Heart right ventricle (tissue), 16 donors: ENCODE measurements at regions of chr5 and their contacts with region 1.

Region 1: DNA sequence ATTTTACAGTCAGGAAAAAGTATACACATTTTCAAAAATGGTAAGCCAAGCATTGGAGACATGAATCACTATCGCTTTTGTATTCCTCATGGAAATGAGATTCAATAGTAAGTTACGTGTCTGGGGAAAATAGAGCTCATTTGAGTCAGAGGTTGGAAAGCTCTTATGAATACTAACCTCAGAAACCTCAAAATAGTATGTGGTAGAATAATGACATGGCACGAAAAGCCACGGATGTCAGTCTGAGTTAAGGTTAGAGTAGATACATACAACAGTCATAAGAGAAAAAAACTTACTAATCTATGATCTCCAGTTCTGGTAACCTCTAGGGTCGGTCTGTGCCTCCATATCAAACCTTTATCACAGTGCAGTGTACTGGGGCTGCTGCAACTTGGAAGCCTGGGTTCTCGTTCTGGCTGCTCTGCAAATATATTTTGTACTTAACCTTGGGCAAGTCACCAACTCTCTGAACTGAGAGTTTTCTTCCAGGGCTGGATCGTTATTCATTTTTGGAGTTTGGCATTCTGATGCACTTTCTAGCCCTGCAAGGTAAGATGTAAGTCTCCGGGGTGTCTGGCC is 31.8 kb downstream of the MAP1B start:
- DNase-seq: no peak
- ATAC-seq: peak in 5 of 8 donors; percentile 10 to 44 (median 34)
- H3K4me3 ChIP-seq: no peak overlapping the region
- H3K27ac ChIP-seq: peak overlapping the region in 8 of 10 donors; percentile 1 to 38 (median 18)
- H3K4me1 ChIP-seq: peaks cover 0 to 78% (median 46%) of the 10 kb centered on the region in 9 donors
- H3K27me3 ChIP-seq: peaks cover 0 to 12% (median 0%) of the 10 kb centered on the region in 7 donors
- CTCF ChIP-seq: no peak

Region 2: GRCh38 chr5:72179028-72179815 is 40.2 kb after region 1 on chr5:
- intact Hi-C with region 1: loop called in 1 of 10 experiments (anchors 5 kb)
- DNase-seq: peak; percentile 45 to 58
- ATAC-seq: peak; percentile 43 to 86 (median 74)
- H3K4me3 ChIP-seq: peak overlapping the region in 5 of 10 donors; percentile 11 to 37 (median 31)
- H3K27ac ChIP-seq: peak overlapping the region in 8 of 10 donors; percentile 51 to 77 (median 61)
- H3K4me1 ChIP-seq: peaks cover 0 to 18% (median 6%) of the 10 kb centered on the region in 9 donors
- H3K27me3 ChIP-seq: no peaks in the 10 kb centered on the region
- CTCF ChIP-seq: no peak

Region 3: GRCh38 chr5:72244862-72245371 is 105.9 kb after region 1 on chr5:
- intact Hi-C with region 1: loop called in 2 of 10 experiments (anchors 10 kb)
- DNase-seq: peak in 1 of 2 donors; percentile 12
- ATAC-seq: peak in 7 of 8 donors; percentile 66 to 88 (median 77)
- H3K4me3 ChIP-seq: no peak overlapping the region
- H3K27ac ChIP-seq: peak overlapping the region in 8 of 10 donors; percentile 4 to 69 (median 52)
- H3K4me1 ChIP-seq: peaks cover 10 to 55% (median 50%) of the 10 kb centered on the region in 9 donors
- H3K27me3 ChIP-seq: no peaks in the 10 kb centered on the region
- CTCF ChIP-seq: peak in 8 of 9 donors; percentile 17 to 56 (median 41)

Region 4: DNA sequence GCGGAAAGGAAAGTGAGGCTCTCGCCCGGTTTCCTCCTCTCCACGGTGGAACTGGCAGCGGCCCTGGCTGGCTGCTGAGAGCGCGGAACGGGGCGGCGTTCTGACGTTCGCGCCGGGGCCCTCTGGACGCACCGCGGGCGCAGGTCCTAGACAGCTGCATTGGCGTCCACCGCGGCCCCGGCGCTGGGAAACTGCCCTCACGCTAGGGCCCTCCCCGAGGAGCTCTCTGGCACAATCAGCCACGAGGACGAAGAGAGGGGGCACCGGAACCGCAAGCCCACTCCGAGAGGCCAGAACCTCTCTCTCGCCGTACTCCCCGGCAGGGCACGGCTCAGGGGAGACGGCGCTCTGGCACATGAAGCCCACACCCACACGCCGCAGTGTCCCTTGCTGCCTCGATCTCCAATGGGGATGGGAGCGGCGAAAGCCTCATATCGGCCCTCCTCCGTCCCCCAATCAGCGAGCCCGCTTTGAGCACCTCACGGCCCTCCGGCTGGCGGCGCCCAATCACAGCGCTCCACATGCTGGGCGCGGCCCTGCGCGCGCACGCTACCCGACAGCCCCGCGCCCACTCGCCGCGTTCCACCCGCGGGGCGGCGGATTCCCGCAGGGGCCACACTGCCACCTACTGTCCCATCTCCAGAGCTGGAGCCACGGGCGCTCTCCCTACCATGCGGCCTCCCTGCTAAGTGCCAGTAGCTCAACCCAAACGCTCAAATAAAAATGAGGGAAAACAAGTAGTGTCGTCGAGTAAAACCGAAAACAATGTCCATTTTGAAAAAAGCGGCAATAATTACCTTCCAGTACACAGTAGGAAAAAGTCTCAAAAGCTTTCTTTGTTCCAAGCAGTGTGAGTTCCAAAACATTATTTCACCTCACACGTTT is 169.2 kb after region 1 on chr5:
- intact Hi-C with region 1: loop called (anchors 1 to 10 kb)
- DNase-seq: peak; percentile 97 to 98
- ATAC-seq: peak; percentile 98 to 100 (median 99)
- H3K4me3 ChIP-seq: peak overlapping the region; percentile 44 to 82 (median 70)
- H3K27ac ChIP-seq: peak overlapping the region; percentile 68 to 97 (median 94)
- H3K4me1 ChIP-seq: peaks cover 0 to 28% (median 12%) of the 10 kb centered on the region in 9 donors
- H3K27me3 ChIP-seq: no peaks in the 10 kb centered on the region
- CTCF ChIP-seq: peak; percentile 84 to 98 (median 93)

Region 5: DNA sequence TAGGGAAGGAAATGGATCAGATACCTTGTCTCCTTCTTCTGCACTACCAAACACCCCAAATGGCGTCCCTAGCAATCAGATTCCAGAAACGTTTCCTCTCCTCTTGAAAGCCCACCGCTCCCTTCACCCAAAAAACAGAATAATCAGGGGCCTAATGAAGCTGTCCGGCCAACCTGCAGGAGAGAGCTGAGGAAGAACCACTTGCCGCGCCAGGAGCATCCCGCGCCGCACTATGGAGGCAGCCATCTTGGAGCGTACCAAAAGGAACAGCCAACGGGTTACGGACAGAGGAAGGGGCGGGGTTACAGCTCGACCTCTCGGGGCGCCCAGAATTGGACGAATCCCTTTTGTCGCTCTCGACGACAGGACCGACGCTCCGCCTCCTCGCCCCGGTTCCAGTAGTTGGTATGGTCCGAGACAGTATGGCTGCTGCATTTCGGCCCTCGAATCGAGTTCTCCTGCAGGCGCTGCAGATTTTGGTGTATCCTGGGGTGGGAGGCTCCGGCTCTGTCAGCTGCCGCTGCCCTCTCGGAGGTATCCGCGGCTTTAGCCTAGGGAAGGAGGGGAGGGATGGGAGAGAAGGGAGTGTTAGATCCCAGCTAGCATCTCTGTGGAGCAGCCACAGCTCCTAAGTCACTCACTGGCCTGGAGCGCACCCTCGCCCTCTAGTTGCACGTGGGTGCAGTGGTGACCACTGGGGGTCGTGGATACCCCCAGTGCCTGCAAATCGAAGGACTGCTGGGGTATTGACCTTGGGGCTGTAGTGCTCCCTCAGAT is 181.1 kb after region 1 on chr5 and contains the starts of genes MRPS27 and PTCD2:
- intact Hi-C with region 1: loop called in 1 of 10 experiments (anchors 10 kb)
- DNase-seq: peak; percentile 93 to 97
- ATAC-seq: peak; percentile 99 to 100 (median 100)
- H3K4me3 ChIP-seq: peak within 1 kb of the TSS; percentile 60 to 91 (median 81)
- H3K27ac ChIP-seq: peak within 1 kb of the TSS; percentile 28 to 86 (median 80)
- H3K4me1 ChIP-seq: peaks cover 0 to 30% (median 20%) of the 10 kb centered on the region in 9 donors
- H3K27me3 ChIP-seq: no peaks in the 10 kb centered on the region
- CTCF ChIP-seq: peak in 4 of 9 donors; percentile 9 to 42 (median 38)
- total RNA-seq, gene MRPS27: 55.7 to 91.8 (median 79.2) TPM
- total RNA-seq, gene PTCD2: 11.3 to 28.9 (median 22.5) TPM